ENCODE measurements at regions of chr6 and their contacts with region 1.

Region 1: DNA sequence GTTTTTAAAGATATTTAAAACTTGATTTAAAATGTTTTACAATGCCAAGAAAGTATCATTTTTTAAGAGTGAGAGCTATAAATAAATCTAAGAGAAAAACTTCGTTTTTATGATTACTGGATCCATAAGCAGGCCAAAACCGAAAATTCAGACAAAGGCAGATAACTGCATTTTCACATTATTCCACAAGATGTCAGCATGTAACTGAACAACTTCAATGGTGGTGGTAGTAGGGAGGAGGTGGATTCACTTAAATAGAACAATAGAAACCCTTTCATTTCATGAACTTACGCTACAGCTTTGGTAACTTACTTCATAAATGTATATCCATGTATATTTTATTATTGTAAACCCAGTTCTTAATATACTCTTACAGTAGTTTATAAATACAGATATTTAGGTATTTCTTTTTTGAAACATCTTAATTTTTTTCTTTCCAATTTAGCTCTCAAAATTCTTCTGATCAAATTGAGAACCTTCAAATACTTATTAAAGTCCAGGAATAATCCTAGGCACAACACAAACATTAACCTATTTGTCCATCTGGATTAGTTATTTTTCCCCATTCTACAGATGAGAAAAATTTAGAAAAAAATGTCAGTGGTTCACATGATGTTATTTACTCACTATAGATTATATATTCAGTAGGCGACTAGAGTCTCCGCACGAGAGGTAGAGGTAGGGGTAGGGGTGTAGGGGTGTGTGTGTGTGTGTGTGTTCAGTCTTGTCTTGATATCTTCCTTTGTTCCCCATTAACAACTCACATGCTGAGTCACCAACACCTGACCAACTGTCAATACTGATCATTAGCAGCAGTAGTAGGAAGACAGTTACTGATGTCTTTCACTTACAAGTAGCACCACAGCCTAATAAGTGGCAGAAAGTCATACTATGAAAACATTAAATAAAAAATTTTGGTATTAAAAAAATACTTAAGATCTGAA is 111.5 kb downstream of the ARHGAP18 start:
- DNase-seq: peak in 3 of 9 experiments; percentile 9 to 83 (median 75)
- ATAC-seq: peak; percentile 99
- H3K4me3 ChIP-seq: no peak overlapping the region
- H3K4me3 Mint-ChIP-seq: no peak overlapping the region
- H3K27ac ChIP-seq: no peak overlapping the region
- H3K27ac Mint-ChIP-seq: no peak overlapping the region
- H3K4me1 ChIP-seq: no peaks in the 10 kb centered on the region
- H3K4me1 Mint-ChIP-seq: peaks cover 1% of the 10 kb centered on the region
- H3K27me3 ChIP-seq: no peaks in the 10 kb centered on the region
- H3K27me3 Mint-ChIP-seq: no peaks in the 10 kb centered on the region
- CTCF ChIP-seq: peak; percentile 96

Region 2: GRCh38 chr6:128963561-128963960 is 635.0 kb before region 1 on chr6:
- CTCF ChIA-PET with region 1: no interaction called
- POLR2A ChIA-PET with region 1: no interaction called
- intact Hi-C with region 1: no loop called
- DNase-seq: no peak
- ATAC-seq: no peak
- H3K4me3 ChIP-seq: no peak overlapping the region
- H3K4me3 Mint-ChIP-seq: no peak overlapping the region
- H3K27ac ChIP-seq: no peak overlapping the region
- H3K27ac Mint-ChIP-seq: no peak overlapping the region
- H3K4me1 ChIP-seq: no peaks in the 10 kb centered on the region
- H3K4me1 Mint-ChIP-seq: no peaks in the 10 kb centered on the region
- H3K27me3 ChIP-seq: no peaks in the 10 kb centered on the region
- H3K27me3 Mint-ChIP-seq: peaks cover 10% of the 10 kb centered on the region
- CTCF ChIP-seq: no peak

Region 3: GRCh38 chr6:129321303-129321702 is 277.2 kb before region 1 on chr6:
- CTCF ChIA-PET with region 1: no interaction called
- POLR2A ChIA-PET with region 1: no interaction called
- intact Hi-C with region 1: no loop called
- DNase-seq: no peak
- ATAC-seq: no peak
- H3K4me3 ChIP-seq: no peak overlapping the region
- H3K4me3 Mint-ChIP-seq: no peak overlapping the region
- H3K27ac ChIP-seq: no peak overlapping the region
- H3K27ac Mint-ChIP-seq: no peak overlapping the region
- H3K4me1 ChIP-seq: no peaks in the 10 kb centered on the region
- H3K4me1 Mint-ChIP-seq: no peaks in the 10 kb centered on the region
- H3K27me3 ChIP-seq: no peaks in the 10 kb centered on the region
- H3K27me3 Mint-ChIP-seq: peaks cover 6% of the 10 kb centered on the region
- CTCF ChIP-seq: no peak

Region 4: DNA sequence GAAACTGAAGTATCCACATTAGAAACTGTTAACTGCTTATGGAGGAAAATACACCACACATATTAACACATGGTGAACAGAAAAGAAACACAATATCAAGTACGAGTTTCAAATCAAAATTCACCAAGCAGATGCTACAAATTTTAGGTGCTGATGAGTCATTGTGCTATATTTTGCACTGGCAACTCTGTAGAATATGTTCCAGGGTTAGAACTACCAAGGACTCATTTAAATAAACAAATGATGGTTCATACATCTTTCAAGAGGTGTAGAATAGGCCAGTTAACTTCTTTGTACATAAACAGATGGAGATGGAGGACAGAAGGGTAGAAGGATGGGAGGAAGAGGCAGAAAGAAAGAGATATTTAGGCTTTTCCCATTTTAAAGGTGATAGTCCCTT is 73.5 kb before region 1 on chr6:
- CTCF ChIA-PET with region 1: no interaction called
- POLR2A ChIA-PET with region 1: no interaction called
- intact Hi-C with region 1: no loop called
- DNase-seq: no peak
- ATAC-seq: no peak
- H3K4me3 ChIP-seq: no peak overlapping the region
- H3K4me3 Mint-ChIP-seq: no peak overlapping the region
- H3K27ac ChIP-seq: no peak overlapping the region
- H3K27ac Mint-ChIP-seq: no peak overlapping the region
- H3K4me1 ChIP-seq: no peaks in the 10 kb centered on the region
- H3K4me1 Mint-ChIP-seq: no peaks in the 10 kb centered on the region
- H3K27me3 ChIP-seq: no peaks in the 10 kb centered on the region
- H3K27me3 Mint-ChIP-seq: no peaks in the 10 kb centered on the region
- CTCF ChIP-seq: no peak

Region 5: DNA sequence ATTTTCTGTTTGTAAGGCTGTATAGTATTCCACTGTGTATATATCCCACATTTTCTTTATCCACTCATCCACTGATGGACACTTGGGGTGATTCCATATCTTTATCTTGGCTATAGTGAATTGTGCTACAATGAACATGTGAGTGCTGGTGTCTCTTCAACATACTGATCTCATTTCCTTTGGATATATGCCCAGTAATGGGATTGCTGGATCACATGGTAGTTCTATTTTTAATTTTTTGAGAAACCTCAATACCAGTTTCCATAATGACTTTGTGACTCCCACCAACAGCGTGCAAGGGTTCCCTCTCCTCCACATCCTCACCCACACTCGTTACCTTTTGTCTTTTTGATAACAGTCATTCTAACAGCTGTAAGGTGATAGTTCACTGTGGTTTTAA is 54.5 kb before region 1 on chr6:
- CTCF ChIA-PET with region 1: no interaction called
- POLR2A ChIA-PET with region 1: no interaction called
- intact Hi-C with region 1: no loop called
- DNase-seq: no peak
- ATAC-seq: no peak
- H3K4me3 ChIP-seq: no peak overlapping the region
- H3K4me3 Mint-ChIP-seq: no peak overlapping the region
- H3K27ac ChIP-seq: no peak overlapping the region
- H3K27ac Mint-ChIP-seq: no peak overlapping the region
- H3K4me1 ChIP-seq: no peaks in the 10 kb centered on the region
- H3K4me1 Mint-ChIP-seq: no peaks in the 10 kb centered on the region
- H3K27me3 ChIP-seq: no peaks in the 10 kb centered on the region
- H3K27me3 Mint-ChIP-seq: no peaks in the 10 kb centered on the region
- CTCF ChIP-seq: no peak

Region 6: DNA sequence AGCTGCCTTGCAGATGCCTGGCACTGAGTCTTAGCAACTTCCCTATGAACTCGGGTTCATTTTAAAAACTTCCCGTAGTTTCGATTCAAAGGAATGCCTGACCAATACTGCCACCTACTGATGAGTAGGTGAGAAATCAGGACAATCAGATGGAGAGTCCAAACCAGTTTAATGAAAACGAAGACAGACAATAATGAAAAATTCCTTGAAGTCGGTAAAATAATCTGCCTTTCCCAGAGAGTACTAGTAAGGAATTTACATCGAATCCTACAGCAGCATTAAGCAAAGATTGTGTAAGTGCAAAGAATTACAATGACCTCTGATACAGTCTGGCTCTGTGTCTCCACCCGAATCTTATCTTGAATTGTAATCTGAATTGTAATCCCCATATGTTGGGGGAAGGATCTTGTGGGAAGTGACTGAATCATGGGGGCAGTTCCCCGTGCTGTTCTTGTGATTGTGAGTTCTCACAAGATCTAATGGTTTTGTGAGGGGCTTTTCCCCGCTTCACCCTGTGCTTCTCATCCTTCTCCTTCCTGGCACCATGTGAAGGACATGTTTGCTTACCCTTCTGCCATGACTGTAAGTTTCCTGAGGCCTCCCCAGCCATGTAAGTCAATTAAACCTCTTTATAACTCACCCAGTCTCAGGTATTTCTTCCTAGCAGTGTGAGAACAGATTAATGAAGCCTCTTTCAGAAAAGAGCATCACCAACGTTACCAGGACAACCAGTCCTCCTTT is 23.0 kb before region 1 on chr6:
- CTCF ChIA-PET with region 1: interaction called, 10 read pairs
- POLR2A ChIA-PET with region 1: no interaction called
- intact Hi-C with region 1: no loop called
- DNase-seq: peak in 2 of 9 experiments; percentile 36 to 55
- ATAC-seq: peak; percentile 42
- H3K4me3 ChIP-seq: peak overlapping the region; percentile 12 to 26
- H3K4me3 Mint-ChIP-seq: peak overlapping the region; percentile 52
- H3K27ac ChIP-seq: no peak overlapping the region
- H3K27ac Mint-ChIP-seq: no peak overlapping the region
- H3K4me1 ChIP-seq: no peaks in the 10 kb centered on the region
- H3K4me1 Mint-ChIP-seq: peaks cover 5% of the 10 kb centered on the region
- H3K27me3 ChIP-seq: no peaks in the 10 kb centered on the region
- H3K27me3 Mint-ChIP-seq: no peaks in the 10 kb centered on the region
- CTCF ChIP-seq: peak; percentile 62

Region 7: GRCh38 chr6:129672881-129673643 is 74.5 kb after region 1 on chr6:
- CTCF ChIA-PET with region 1: interaction called, 4 read pairs
- POLR2A ChIA-PET with region 1: no interaction called
- intact Hi-C with region 1: loop called in 1 of 2 experiments (anchors 2 kb)
- DNase-seq: peak in 3 of 9 experiments; percentile 14 to 59 (median 39)
- ATAC-seq: peak; percentile 58
- H3K4me3 ChIP-seq: no peak overlapping the region
- H3K4me3 Mint-ChIP-seq: peak overlapping the region; percentile 74
- H3K27ac ChIP-seq: peak overlapping the region in 1 of 2 experiments; percentile 59
- H3K27ac Mint-ChIP-seq: peak overlapping the region; percentile 85
- H3K4me1 ChIP-seq: peaks cover 21% of the 10 kb centered on the region
- H3K4me1 Mint-ChIP-seq: peaks cover 22% of the 10 kb centered on the region
- H3K27me3 ChIP-seq: no peaks in the 10 kb centered on the region
- H3K27me3 Mint-ChIP-seq: no peaks in the 10 kb centered on the region
- CTCF ChIP-seq: no peak

Region 8: DNA sequence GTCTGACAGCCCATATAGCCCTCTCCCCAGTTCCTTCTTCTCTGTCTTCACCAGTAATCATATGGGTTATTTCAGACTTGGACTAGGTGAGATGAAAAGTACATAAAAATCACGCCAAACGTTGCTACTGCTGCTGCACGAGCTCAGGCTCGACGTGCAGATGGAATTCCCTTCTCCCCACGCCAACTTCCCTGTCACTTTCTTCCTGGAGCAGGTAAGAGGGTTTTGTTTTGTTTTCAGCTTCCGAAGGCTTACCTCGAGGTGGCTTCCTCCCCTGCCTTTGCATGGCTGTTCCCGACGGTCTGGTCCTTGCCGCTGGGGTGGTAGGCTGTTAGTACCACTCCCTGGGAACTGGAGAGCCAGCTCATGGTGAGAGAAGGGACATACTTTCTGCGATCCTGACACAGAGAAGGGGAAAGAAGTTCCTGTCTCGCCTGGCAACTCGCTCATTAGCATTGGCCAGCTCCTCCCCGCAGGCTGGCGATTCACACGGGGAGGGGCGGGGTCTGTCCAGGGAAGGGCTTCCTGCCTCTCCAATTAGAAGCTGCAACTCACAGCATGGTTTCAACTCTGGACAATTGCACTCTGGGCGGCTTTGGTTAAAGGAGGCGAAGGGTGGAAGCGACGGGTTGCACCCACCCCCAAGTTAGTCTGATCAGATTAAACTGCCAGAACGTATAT is 111.4 kb after region 1 on chr6 and contains the start of gene ARHGAP18:
- CTCF ChIA-PET with region 1: interaction called, 24 read pairs
- POLR2A ChIA-PET with region 1: no interaction called
- intact Hi-C with region 1: no loop called
- DNase-seq: peak; percentile 36 to 81 (median 63)
- ATAC-seq: peak; percentile 90
- H3K4me3 ChIP-seq: peak within 1 kb of the TSS; percentile 64 to 79
- H3K4me3 Mint-ChIP-seq: peak within 1 kb of the TSS; percentile 93
- H3K27ac ChIP-seq: peak within 1 kb of the TSS; percentile 8 to 56
- H3K27ac Mint-ChIP-seq: peak within 1 kb of the TSS; percentile 70
- H3K4me1 ChIP-seq: peaks cover 7% of the 10 kb centered on the region
- H3K4me1 Mint-ChIP-seq: peaks cover 34% of the 10 kb centered on the region
- H3K27me3 ChIP-seq: no peaks in the 10 kb centered on the region
- H3K27me3 Mint-ChIP-seq: no peaks in the 10 kb centered on the region
- CTCF ChIP-seq: no peak
- total RNA-seq, gene ARHGAP18: 0.71 to 1.5 TPM

Region 9: GRCh38 chr6:129748212-129748900 is 149.8 kb after region 1 on chr6:
- CTCF ChIA-PET with region 1: interaction called, 34 read pairs
- POLR2A ChIA-PET with region 1: interaction called, 8 read pairs
- intact Hi-C with region 1: loop called in 1 of 2 experiments (anchors 1 kb)
- DNase-seq: peak in 8 of 9 experiments; percentile 25 to 85 (median 48)
- ATAC-seq: peak; percentile 84
- H3K4me3 ChIP-seq: peak overlapping the region; percentile 6 to 25
- H3K4me3 Mint-ChIP-seq: peak overlapping the region; percentile 66
- H3K27ac ChIP-seq: peak overlapping the region; percentile 49 to 87
- H3K27ac Mint-ChIP-seq: peak overlapping the region; percentile 82
- H3K4me1 ChIP-seq: peaks cover 53% of the 10 kb centered on the region
- H3K4me1 Mint-ChIP-seq: peaks cover 60% of the 10 kb centered on the region
- H3K27me3 ChIP-seq: no peaks in the 10 kb centered on the region
- H3K27me3 Mint-ChIP-seq: no peaks in the 10 kb centered on the region
- CTCF ChIP-seq: no peak

Region 10: GRCh38 chr6:129936329-129937165 is 338.0 kb after region 1 on chr6:
- CTCF ChIA-PET with region 1: interaction called, 7 read pairs
- POLR2A ChIA-PET with region 1: no interaction called
- intact Hi-C with region 1: loop called in 1 of 2 experiments (anchors 1 kb)
- DNase-seq: peak in 6 of 9 experiments; percentile 26 to 69 (median 45)
- ATAC-seq: peak; percentile 40
- H3K4me3 ChIP-seq: no peak overlapping the region
- H3K4me3 Mint-ChIP-seq: no peak overlapping the region
- H3K27ac ChIP-seq: no peak overlapping the region
- H3K27ac Mint-ChIP-seq: no peak overlapping the region
- H3K4me1 ChIP-seq: no peaks in the 10 kb centered on the region
- H3K4me1 Mint-ChIP-seq: peaks cover 2% of the 10 kb centered on the region
- H3K27me3 ChIP-seq: no peaks in the 10 kb centered on the region
- H3K27me3 Mint-ChIP-seq: peaks cover 10% of the 10 kb centered on the region
- CTCF ChIP-seq: peak; percentile 76

Region 11: DNA sequence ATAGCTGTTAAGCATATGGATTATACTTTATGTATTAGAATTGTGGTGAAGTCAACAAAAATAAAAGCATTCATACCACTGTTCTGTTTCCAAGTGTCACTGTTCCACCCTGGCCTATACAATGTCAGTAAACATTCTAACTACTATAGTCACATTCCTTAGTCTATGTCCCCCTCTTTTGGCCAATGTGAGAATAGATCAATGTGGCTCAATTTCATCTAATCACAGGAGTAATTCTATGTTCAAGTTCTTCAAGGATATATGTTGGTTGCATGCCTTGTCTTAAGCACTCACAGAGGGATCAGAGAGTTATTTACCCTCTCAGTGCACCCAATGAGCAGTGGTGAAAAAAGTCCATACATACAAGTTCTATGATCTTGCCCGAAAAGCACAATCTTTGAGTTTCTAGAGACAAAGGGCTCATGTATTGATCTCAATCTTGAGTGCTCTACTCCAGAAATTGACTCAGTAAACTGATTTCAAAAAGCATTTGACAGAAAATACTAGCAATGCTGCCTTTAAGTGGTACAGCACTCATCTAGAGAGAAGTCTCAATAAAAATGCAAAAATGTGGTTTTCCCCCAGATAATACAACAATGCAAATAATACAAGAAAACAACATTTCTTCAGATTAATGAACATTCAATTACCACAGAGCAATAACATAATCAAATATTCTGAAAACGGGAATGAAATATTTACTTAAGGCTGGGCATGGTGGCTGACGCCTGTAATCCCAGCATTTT is 1245.2 kb after region 1 on chr6:
- CTCF ChIA-PET with region 1: no interaction called
- POLR2A ChIA-PET with region 1: no interaction called
- intact Hi-C with region 1: loop called (anchors 2 to 5 kb)
- DNase-seq: peak in 3 of 9 experiments; percentile 7 to 75 (median 64)
- ATAC-seq: peak; percentile 86
- H3K4me3 ChIP-seq: no peak overlapping the region
- H3K4me3 Mint-ChIP-seq: no peak overlapping the region
- H3K27ac ChIP-seq: no peak overlapping the region
- H3K27ac Mint-ChIP-seq: no peak overlapping the region
- H3K4me1 ChIP-seq: no peaks in the 10 kb centered on the region
- H3K4me1 Mint-ChIP-seq: no peaks in the 10 kb centered on the region
- H3K27me3 ChIP-seq: no peaks in the 10 kb centered on the region
- H3K27me3 Mint-ChIP-seq: no peaks in the 10 kb centered on the region
- CTCF ChIP-seq: peak; percentile 86

Measured in CD8-positive, alpha-beta T cell (primary cell).